ENCODE measurements at regions of chr1 and their contacts with region 1.

Region 1: GRCh38 chr1:183339556-183340167 is 78.5 kb downstream of the NMNAT2 start:
- DNase-seq: no peak
- ATAC-seq: no peak
- H3K4me3 ChIP-seq: no peak overlapping the region
- H3K27ac ChIP-seq: no peak overlapping the region
- H3K4me1 ChIP-seq: no peaks in the 10 kb centered on the region
- H3K27me3 ChIP-seq: peaks cover 4% of the 10 kb centered on the region; the same call in 1 of the 2 replicates
- CTCF ChIP-seq: no peak

Region 2: DNA sequence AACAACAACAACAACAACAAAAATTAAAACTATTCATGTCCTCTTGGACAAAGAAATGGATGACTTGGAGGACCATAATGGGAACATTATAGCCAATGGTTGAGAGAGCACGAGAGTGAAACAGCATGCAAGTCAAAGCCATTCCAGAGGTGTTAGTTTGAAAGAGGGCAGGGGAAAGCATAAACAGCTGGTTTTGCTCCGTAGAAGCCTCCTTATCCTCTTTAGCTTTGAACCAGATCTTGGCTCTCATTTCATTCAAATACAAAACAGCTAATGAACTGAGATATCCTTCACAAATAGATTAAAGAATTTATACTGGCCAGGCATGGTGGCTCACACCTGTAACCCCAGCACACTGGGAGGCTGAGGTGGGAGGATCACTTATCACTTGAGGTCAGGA is 123.9 kb after region 1 on chr1:
- CTCF ChIA-PET with region 1: no interaction called
- POLR2A ChIA-PET with region 1: interaction called, 12 read pairs
- in situ Hi-C with region 1: no loop called
- intact Hi-C with region 1: no loop called
- DNase-seq: no peak
- ATAC-seq: no peak
- H3K4me3 ChIP-seq: no peak overlapping the region
- H3K27ac ChIP-seq: no peak overlapping the region
- H3K4me1 ChIP-seq: no peaks in the 10 kb centered on the region
- H3K27me3 ChIP-seq: peaks cover 3% of the 10 kb centered on the region; the same call in 1 of the 2 replicates
- CTCF ChIP-seq: no peak

Region 3: GRCh38 chr1:183699616-183700160 is 360.0 kb after region 1 on chr1:
- CTCF ChIA-PET with region 1: no interaction called
- POLR2A ChIA-PET with region 1: no interaction called
- in situ Hi-C with region 1: no loop called
- intact Hi-C with region 1: no loop called
- DNase-seq: peak; percentile 32
- ATAC-seq: no peak
- H3K4me3 ChIP-seq: no peak overlapping the region
- H3K27ac ChIP-seq: no peak overlapping the region
- H3K4me1 ChIP-seq: no peaks in the 10 kb centered on the region
- H3K27me3 ChIP-seq: no peaks in the 10 kb centered on the region
- CTCF ChIP-seq: no peak

Measured in Panc1 (cell line).